Endothelial cell of umbilical vein (primary cell): ENCODE measurements at regions of chr16 and their contacts with region 1.

Region 1: DNA sequence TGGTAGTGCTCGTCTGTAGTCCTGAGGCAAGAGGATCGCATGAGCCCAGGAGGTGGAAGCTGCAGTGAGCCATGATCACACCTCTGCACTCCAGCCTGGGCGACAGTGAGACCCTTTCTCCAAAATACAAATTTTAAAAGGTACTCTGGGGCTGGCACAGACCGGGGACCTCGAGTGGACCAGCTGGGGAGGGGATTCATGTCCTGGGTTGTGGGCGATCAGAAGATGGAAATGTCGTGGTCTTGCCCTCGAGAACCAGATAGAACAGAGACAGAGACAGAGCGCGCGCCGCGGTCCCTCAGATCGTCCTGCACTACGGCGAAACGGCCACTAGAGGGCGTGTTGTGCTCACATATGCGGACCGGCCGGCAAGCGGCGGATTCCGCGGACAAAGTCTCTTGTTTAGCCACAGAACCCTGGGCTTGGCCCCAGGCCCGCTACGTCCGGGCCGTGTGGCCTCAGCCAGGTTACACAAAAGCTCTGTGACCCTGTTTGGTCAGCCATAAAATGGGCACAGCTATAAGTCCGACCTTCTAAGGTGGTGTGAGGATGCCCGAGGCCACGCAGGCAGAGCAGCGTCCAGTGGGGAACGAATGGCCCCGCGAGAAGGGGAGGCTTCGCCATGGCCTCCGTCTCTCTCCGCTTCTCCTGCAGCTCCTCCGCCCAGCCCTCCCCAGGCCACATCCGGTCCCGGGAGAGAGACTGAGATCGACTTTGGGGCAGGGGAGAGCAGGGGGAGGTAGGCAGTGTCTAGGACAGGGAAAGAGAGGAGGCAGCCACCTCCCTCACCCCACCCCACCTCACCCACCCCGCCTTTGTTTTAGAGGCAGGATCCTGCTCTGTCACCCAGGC is 14.6 kb upstream of the SBK1 start:
- DNase-seq: peak; percentile 74
- H3K4me3 ChIP-seq: peak overlapping the region in 2 of 3 experiments; percentile 18 to 35
- H3K27ac ChIP-seq: no peak overlapping the region
- H3K4me1 ChIP-seq: peaks cover 2% of the 10 kb centered on the region
- H3K27me3 ChIP-seq: peaks cover 0 to 2% of the 10 kb centered on the region in 2 experiments
- CTCF ChIP-seq: peak; percentile 91 to 95
- POLR2A ChIP-seq: no peak

Region 2: GRCh38 chr16:27892881-27893280 is 384.9 kb before region 1 on chr16:
- CTCF ChIA-PET with region 1: no interaction called
- POLR2A ChIA-PET with region 1: no interaction called
- dilution Hi-C with region 1: no loop called
- intact Hi-C with region 1: no loop called
- DNase-seq: no peak
- H3K4me3 ChIP-seq: no peak overlapping the region
- H3K27ac ChIP-seq: no peak overlapping the region
- H3K4me1 ChIP-seq: no peaks in the 10 kb centered on the region
- H3K27me3 ChIP-seq: peaks cover 4 to 8% of the 10 kb centered on the region in 2 experiments
- CTCF ChIP-seq: no peak
- POLR2A ChIP-seq: no peak

Region 3: DNA sequence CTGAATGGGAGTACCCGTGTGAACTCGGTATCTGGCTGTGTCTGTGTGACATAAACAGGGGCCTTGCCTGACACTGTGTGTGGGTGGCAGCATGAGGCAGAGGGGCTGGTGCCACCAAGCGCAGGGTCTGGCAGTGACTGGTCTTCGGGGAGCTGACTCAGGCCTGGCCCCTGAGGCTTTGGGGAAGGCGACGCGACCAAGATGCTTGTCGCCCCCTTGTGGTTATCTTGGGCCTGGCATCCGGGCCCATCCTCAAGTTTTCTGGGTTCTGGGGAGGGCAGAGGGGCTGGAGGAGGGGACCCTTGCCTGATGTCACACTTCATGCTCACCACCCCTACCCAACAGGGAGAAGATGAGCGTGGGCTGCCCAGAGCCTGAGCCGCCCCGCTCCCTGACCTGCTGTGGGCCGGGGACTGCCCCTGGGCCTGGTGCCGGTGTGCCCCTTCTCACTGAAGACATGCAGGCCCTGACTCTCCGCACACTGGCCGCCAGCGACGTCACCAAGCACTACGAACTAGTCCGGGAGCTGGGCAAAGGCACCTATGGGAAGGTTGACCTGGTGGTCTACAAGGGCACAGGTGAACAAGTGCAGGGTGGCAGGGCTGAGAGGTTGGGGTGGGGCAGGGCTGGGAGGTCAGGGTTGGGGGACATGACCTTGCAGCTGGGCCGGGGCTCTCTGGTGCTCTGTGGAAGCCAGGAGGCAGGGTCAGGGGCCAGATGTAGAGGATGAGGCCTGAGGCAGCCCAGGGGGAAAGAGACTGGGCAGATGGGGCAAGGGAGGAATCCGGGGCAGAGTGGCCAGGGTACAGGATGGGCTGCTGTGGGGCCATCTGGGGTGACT is 39.5 kb after region 1 on chr16:
- CTCF ChIA-PET with region 1: interaction called, 26 read pairs
- POLR2A ChIA-PET with region 1: no interaction called
- dilution Hi-C with region 1: no loop called
- intact Hi-C with region 1: loop called (anchors 1 kb)
- DNase-seq: peak; percentile 44
- H3K4me3 ChIP-seq: no peak overlapping the region
- H3K27ac ChIP-seq: no peak overlapping the region
- H3K4me1 ChIP-seq: no peaks in the 10 kb centered on the region
- H3K27me3 ChIP-seq: no peaks in the 10 kb centered on the region
- CTCF ChIP-seq: peak; percentile 81 to 92
- POLR2A ChIP-seq: no peak